ENCODE measurements at regions of chr15 and their contacts with region 1.

Region 1: GRCh38 chr15:49620658-49621368 is at the starts of genes DTWD1 and FAM227B:
- DNase-seq: peak; percentile 98
- H3K4me3 Mint-ChIP-seq: peak within 1 kb of the TSS; percentile 97
- H3K27ac Mint-ChIP-seq: peak within 1 kb of the TSS; percentile 98
- H3K4me1 Mint-ChIP-seq: peaks cover 38% of the 10 kb centered on the region
- H3K27me3 Mint-ChIP-seq: no peaks in the 10 kb centered on the region
- total RNA-seq, gene DTWD1: 24.9 and 25.8 TPM in 2 replicates
- total RNA-seq, gene FAM227B: 2.1 and 2.7 TPM in 2 replicates

Region 2: DNA sequence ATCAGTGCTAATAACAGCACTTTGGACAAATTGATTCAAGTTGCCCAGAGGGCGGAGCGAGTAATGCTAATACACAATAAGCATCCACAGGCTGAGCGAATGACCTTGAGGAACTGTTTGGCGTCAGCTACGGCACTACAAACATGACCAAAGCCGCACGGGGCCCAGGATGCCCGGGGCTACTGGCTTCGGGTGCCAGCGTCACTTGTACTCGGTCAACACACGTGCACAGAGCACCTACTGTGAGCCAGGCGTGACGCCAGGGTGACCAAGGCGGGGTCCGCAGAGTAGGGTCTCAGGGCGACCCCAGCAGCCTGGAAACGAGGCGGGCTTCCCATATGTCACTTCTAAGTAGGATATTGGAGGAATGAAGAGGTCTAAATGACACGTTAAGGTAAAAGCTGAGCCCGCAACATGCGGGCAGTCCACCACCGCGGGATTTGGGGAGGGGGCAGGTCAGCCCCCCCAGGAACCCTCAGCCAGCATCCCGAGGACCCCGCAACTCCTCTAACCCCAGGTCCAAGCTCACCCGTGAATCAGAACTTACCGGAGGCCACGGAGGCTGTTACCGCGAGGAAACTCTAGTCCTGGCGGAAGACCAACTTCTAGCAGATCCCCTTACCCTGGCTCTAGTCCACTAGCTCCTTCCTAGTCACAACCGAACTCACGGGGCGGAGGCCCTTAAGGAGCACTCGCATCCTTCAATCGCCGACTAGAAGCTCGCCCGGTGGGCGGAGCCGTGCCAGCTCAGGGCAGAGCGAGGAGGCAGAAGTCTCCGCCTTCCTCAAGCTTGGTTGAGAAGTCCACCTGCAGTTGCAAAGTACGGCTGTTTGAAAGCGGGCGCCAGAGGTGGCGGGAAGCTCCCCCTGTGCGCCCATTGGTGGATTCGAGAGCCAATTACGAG is 810.1 kb before region 1 on chr15 and contains the start of gene CEP152:
- intact Hi-C with region 1: loop called (anchors 1 kb)
- DNase-seq: peak; percentile 99
- H3K4me3 Mint-ChIP-seq: peak within 1 kb of the TSS; percentile 96
- H3K27ac Mint-ChIP-seq: peak within 1 kb of the TSS; percentile 96
- H3K4me1 Mint-ChIP-seq: peaks cover 35% of the 10 kb centered on the region
- H3K27me3 Mint-ChIP-seq: peaks cover 17% of the 10 kb centered on the region
- total RNA-seq, gene CEP152: 32.0 and 32.2 TPM in 2 replicates

Region 3: GRCh38 chr15:49155110-49155833 is 465.5 kb before region 1 on chr15 and contains the start of gene COPS2:
- intact Hi-C with region 1: loop called (anchors 1 kb)
- DNase-seq: peak; percentile 98
- H3K4me3 Mint-ChIP-seq: peak within 1 kb of the TSS; percentile 99
- H3K27ac Mint-ChIP-seq: peak within 1 kb of the TSS; percentile 99
- H3K4me1 Mint-ChIP-seq: peaks cover 40% of the 10 kb centered on the region
- H3K27me3 Mint-ChIP-seq: peaks cover 1% of the 10 kb centered on the region
- total RNA-seq, gene COPS2: 98.6 and 99.0 TPM in 2 replicates

Region 4: GRCh38 chr15:49235446-49236124 is 385.2 kb before region 1 on chr15:
- intact Hi-C with region 1: loop called (anchors 5 kb)
- DNase-seq: peak; percentile 86
- H3K4me3 Mint-ChIP-seq: no peak overlapping the region
- H3K27ac Mint-ChIP-seq: peak overlapping the region; percentile 11
- H3K4me1 Mint-ChIP-seq: peaks cover 15% of the 10 kb centered on the region
- H3K27me3 Mint-ChIP-seq: no peaks in the 10 kb centered on the region

Region 5: DNA sequence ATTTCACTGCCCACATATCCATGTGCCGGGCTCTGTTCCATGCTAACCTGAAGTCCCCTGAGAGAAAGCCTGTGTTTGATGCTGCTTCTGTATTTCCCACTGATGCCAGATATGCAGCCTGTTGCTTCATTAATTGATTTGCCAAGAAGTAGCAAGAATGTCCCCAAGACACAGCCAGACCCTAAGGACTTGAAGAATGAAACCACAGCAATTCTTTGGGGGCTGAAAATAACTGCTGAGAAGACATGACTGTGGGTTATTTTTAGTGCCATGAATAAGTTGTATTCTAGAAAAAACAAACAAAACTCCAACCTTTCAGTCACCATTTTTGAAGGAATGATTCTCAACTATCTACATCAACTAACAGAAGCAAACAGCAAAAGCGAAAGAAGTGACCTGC is 226.6 kb after region 1 on chr15:
- intact Hi-C with region 1: no loop called
- DNase-seq: no peak
- H3K4me3 Mint-ChIP-seq: no peak overlapping the region
- H3K27ac Mint-ChIP-seq: no peak overlapping the region
- H3K4me1 Mint-ChIP-seq: no peaks in the 10 kb centered on the region
- H3K27me3 Mint-ChIP-seq: no peaks in the 10 kb centered on the region

Region 6: GRCh38 chr15:50066192-50066591 is 445.4 kb after region 1 on chr15:
- intact Hi-C with region 1: loop called (anchors 5 kb)
- DNase-seq: peak; percentile 80
- H3K4me3 Mint-ChIP-seq: peak overlapping the region; percentile 27
- H3K27ac Mint-ChIP-seq: peak overlapping the region; percentile 91
- H3K4me1 Mint-ChIP-seq: peaks cover 38% of the 10 kb centered on the region
- H3K27me3 Mint-ChIP-seq: no peaks in the 10 kb centered on the region

Region 7: GRCh38 chr15:50241684-50242450 is 621.1 kb after region 1 on chr15:
- intact Hi-C with region 1: no loop called
- DNase-seq: no peak
- H3K4me3 Mint-ChIP-seq: peak overlapping the region; percentile 18
- H3K27ac Mint-ChIP-seq: peak overlapping the region; percentile 82
- H3K4me1 Mint-ChIP-seq: peaks cover 27% of the 10 kb centered on the region
- H3K27me3 Mint-ChIP-seq: no peaks in the 10 kb centered on the region

Region 8: GRCh38 chr15:50765195-50765973 is 1144.6 kb after region 1 on chr15 and contains the start of gene SPPL2A:
- intact Hi-C with region 1: loop called (anchors 10 kb)
- DNase-seq: peak; percentile 94
- H3K4me3 Mint-ChIP-seq: peak within 1 kb of the TSS; percentile 92
- H3K27ac Mint-ChIP-seq: peak within 1 kb of the TSS; percentile 97
- H3K4me1 Mint-ChIP-seq: peaks cover 54% of the 10 kb centered on the region
- H3K27me3 Mint-ChIP-seq: no peaks in the 10 kb centered on the region
- total RNA-seq, gene SPPL2A: 85.0 and 86.6 TPM in 2 replicates

Measured in activated CD4-positive, alpha-beta T cell treated with anti-CD3 and anti-CD28 coated beads, Interleukin-2, amount 10 ng/mL, durations not matched to agents 24 days and 14 days (primary cell).